ENCODE measurements at regions of chr3 and their contacts with region 1.

Region 1: DNA sequence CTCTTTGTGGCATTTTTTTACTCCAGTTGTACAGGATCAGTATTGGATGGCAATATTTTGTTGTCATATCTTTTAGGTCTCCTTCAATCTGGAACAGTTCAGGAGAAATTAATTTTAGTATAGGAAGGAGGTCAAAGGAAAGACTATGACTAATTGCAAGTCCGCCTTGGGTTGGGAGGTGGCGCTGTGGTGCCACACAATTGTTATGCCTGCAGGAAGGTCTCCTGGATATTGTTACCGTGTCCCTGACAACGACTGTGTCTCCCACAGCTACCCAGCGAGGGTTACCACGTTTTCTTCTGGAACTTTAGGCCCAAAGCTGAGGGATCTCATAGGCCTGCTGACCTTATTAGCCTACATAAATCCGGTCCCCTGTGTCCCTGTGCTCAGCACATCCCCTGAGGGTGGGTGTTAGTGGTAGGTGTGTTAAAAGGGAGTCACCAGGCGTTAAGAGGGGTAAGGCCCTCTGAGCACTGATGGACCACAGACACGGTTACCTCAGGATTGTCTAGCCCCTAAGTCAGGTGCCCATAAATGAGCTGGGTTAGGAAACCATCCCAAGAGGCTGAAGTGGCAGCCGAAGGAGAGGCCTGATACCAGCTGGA is 31.5 kb downstream of the KCNAB1 start:
- DNase-seq: peak; percentile 43 to 53
- H3K4me3 ChIP-seq: no peak overlapping the region
- H3K27ac ChIP-seq: peak overlapping the region in 1 of 2 donors; percentile 68
- H3K4me1 ChIP-seq: peaks cover 0 to 9% of the 10 kb centered on the region in 2 donors
- H3K27me3 ChIP-seq: no peaks in the 10 kb centered on the region
- CTCF ChIP-seq: peak; percentile 35 to 56 (median 50)
- POLR2A ChIP-seq: no peak

Region 2: GRCh38 chr3:155890671-155891190 is 261.2 kb before region 1 on chr3:
- intact Hi-C with region 1: no loop called
- DNase-seq: no peak
- H3K4me3 ChIP-seq: no peak overlapping the region
- H3K27ac ChIP-seq: no peak overlapping the region
- H3K4me1 ChIP-seq: no peaks in the 10 kb centered on the region
- H3K27me3 ChIP-seq: no peaks in the 10 kb centered on the region
- CTCF ChIP-seq: no peak
- POLR2A ChIP-seq: no peak

Region 3: DNA sequence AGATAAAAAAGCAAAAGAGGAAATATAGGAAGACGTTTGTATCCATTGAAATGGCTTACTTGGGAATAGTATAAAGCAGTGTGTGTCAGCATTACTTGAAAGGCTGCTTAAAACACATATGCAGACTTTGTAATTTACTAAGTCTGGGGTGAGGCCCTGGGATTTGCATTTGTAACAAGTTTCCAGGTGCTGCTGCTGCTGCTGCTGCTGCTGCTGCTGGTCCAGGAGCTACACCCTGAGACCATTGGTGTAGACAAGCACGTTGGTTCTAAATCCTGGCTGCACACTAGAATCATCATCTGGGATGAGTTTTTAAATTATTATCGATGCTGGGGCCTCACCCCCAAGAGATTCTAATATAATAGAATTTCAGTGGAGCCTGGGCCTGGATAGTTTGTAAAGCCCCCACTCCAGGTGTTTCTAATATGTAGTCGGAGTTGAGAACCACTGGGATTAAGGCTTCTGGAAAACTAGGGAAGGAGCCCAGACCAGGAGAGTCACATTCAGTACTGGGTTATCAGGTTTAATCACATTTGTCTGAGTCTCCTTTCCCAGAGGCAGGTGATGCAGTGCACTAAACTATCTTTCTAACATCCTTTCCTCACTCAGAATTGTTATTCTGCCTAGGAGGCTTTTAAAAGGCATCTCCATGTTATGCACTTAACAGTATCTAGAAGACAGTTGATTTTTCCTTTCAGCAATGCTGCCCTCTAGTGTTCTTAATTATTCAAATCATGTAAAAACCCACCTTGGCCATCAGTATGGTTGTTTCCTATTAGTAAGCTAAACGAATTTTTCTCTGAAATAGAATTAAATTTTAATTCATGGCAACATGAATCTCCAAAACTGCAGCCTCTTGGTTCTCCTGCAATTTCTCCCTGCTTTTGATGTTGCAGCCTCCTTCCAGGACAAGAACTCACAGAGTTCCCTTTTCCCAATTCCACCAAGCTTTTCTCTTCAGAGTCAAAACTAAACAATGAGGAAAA is 357.6 kb after region 1 on chr3:
- intact Hi-C with region 1: loop called (anchors 5 kb)
- DNase-seq: no peak
- H3K4me3 ChIP-seq: no peak overlapping the region
- H3K27ac ChIP-seq: no peak overlapping the region
- H3K4me1 ChIP-seq: no peaks in the 10 kb centered on the region
- H3K27me3 ChIP-seq: no peaks in the 10 kb centered on the region
- CTCF ChIP-seq: peak; percentile 58 to 73 (median 63)
- POLR2A ChIP-seq: no peak

Region 4: DNA sequence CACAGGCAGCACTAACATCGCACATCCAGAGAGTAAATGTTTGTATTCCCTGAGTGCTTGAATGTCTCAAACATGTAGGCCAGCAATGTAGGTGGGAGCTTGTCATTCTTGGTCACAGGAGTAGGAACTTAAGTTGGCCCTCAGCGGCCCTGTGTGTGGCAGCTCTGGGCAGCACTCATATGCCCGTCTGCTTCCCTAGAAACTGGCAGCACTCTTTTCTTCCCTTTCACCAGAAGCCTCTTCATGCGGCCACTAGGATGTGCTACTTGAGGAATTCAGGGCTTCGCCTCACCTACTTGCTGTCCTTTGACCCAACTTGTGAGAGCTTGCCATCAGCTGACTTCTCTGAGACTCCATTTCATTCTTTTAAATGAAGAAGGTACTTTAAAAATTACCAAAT is 591.9 kb after region 1 on chr3:
- intact Hi-C with region 1: no loop called
- DNase-seq: no peak
- H3K4me3 ChIP-seq: no peak overlapping the region
- H3K27ac ChIP-seq: no peak overlapping the region
- H3K4me1 ChIP-seq: no peaks in the 10 kb centered on the region
- H3K27me3 ChIP-seq: no peaks in the 10 kb centered on the region
- CTCF ChIP-seq: no peak
- POLR2A ChIP-seq: no peak

Measured in uterus (tissue), 4 donors.